ENCODE measurements at regions of chr11 and their contacts with region 1.

Region 1: DNA sequence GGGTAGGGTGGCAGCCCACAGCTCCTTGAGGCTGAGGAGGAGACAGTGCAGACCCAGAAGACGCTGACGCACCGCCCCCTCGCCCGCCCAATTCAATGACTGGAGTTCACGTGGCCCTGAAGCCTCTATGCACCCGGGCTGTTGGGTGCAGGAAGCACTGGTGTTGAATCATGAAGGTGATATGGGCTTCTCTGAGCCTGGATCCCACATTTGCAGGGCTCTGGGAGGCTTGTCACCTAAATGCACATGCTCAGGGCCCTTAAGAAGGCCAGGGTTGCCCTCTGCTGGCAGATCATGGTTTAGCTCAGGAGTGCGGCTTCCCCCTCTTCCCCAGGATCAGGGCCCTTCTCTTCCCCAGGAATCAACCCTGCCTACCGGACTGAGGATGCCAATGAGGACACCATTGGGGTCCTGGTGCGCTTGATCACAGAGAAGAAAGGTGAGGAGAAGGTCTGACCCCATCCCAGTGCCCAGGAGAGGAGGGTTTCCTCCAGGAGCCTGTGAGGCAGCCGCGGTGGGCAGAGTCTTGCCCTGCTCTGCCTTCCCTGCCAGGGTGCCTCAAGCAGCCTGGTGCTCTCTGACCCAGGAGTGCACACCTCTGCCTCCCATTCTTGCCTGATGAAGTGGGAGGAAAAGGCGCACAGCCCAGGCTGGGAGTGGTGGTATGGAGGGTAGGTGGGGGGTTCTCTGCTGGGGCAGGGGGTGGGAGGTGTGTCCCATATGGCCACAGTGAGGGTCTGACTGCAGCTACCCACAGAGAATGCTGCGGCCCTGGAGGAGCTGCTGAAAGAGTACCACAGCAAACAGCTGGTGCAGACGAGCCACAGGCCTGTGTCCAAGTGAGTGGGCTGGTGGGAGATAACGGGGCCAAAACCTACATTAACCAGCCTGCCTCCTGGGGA is 17.5 kb downstream of the RELT start:
- DNase-seq: peak; percentile 87
- ATAC-seq: peak; percentile 84
- H3K4me3 Mint-ChIP-seq: no peak overlapping the region
- H3K27ac Mint-ChIP-seq: no peak overlapping the region
- H3K4me1 Mint-ChIP-seq: no peaks in the 10 kb centered on the region
- H3K27me3 Mint-ChIP-seq: no peaks in the 10 kb centered on the region
- CTCF ChIP-seq: peak; percentile 68

Region 2: GRCh38 chr11:73297702-73298632 is 95.8 kb before region 1 on chr11:
- CTCF ChIA-PET with region 1: interaction called, 11 read pairs
- POLR2A ChIA-PET with region 1: no interaction called
- DNase-seq: no peak
- ATAC-seq: no peak
- H3K4me3 Mint-ChIP-seq: no peak overlapping the region
- H3K27ac Mint-ChIP-seq: no peak overlapping the region
- H3K4me1 Mint-ChIP-seq: peaks cover 12% of the 10 kb centered on the region
- H3K27me3 Mint-ChIP-seq: peaks cover 6% of the 10 kb centered on the region
- CTCF ChIP-seq: no peak

Region 3: GRCh38 chr11:73366265-73366610 is 27.5 kb before region 1 on chr11:
- CTCF ChIA-PET with region 1: interaction called, 39 read pairs
- POLR2A ChIA-PET with region 1: no interaction called
- DNase-seq: no peak
- ATAC-seq: no peak
- H3K4me3 Mint-ChIP-seq: no peak overlapping the region
- H3K27ac Mint-ChIP-seq: no peak overlapping the region
- H3K4me1 Mint-ChIP-seq: peaks cover 5% of the 10 kb centered on the region
- H3K27me3 Mint-ChIP-seq: peaks cover 7% of the 10 kb centered on the region
- CTCF ChIP-seq: no peak

Region 4: GRCh38 chr11:73376160-73376802 is 17.4 kb before region 1 on chr11 and contains the start of gene RELT:
- CTCF ChIA-PET with region 1: interaction called, 41 read pairs
- POLR2A ChIA-PET with region 1: no interaction called
- DNase-seq: peak; percentile 93
- ATAC-seq: peak; percentile 95
- H3K4me3 Mint-ChIP-seq: peak within 1 kb of the TSS; percentile 70
- H3K27ac Mint-ChIP-seq: no peak within 1 kb of the TSS
- H3K4me1 Mint-ChIP-seq: peaks cover 12% of the 10 kb centered on the region
- H3K27me3 Mint-ChIP-seq: peaks cover 16% of the 10 kb centered on the region
- CTCF ChIP-seq: peak; percentile 71
- total RNA-seq, gene RELT: 5.7 to 6.7 TPM (median 5.9 TPM) in 3 replicates

Region 5: GRCh38 chr11:73404048-73404447 is 10.3 kb after region 1 on chr11:
- CTCF ChIA-PET with region 1: interaction called, 12 read pairs
- POLR2A ChIA-PET with region 1: no interaction called
- DNase-seq: peak; percentile 66
- ATAC-seq: peak; percentile 91
- H3K4me3 Mint-ChIP-seq: no peak overlapping the region
- H3K27ac Mint-ChIP-seq: no peak overlapping the region
- H3K4me1 Mint-ChIP-seq: peaks cover 6% of the 10 kb centered on the region
- H3K27me3 Mint-ChIP-seq: no peaks in the 10 kb centered on the region
- CTCF ChIP-seq: no peak

Measured in WTC11 (cell line).